Activated T-helper 2 cell treated with anti-CD3 and anti-CD28 coated beads, Interferon-gamma antibody, Interleukin-2, Interleukin-4, amounts not matched to agents 10 μg/mL and 5 μg/mL and 100 μg/mL, durations not matched to agents 14 hours and 24 hours and 36 hours (primary cell): ENCODE measurements at regions of chr5 and their contacts with region 1.

Region 1: DNA sequence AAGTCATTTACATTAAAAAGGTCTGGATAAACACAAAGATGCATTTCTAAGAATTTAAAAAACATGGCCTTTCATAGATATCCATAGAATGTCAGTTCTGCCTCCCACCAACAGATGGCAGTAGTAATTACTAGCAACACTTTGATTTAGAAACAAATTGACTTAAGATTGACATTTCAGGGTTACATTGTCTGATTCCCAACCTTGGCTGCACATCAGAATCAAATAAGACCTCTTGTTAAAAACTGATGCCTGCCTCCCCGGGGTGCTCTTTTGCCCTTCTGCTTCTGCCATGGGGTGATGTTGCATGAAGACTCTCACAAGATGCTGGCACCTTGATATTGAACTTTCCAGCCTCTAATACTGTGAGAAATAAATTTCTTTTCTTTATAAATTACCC is 146.2 kb upstream of the GPR151 start:
- DNase-seq: no peak
- H3K4me3 Mint-ChIP-seq: no peak overlapping the region
- H3K27ac Mint-ChIP-seq: no peak overlapping the region
- H3K4me1 Mint-ChIP-seq: no peaks in the 10 kb centered on the region
- H3K27me3 Mint-ChIP-seq: peaks cover 2% of the 10 kb centered on the region

Region 2: DNA sequence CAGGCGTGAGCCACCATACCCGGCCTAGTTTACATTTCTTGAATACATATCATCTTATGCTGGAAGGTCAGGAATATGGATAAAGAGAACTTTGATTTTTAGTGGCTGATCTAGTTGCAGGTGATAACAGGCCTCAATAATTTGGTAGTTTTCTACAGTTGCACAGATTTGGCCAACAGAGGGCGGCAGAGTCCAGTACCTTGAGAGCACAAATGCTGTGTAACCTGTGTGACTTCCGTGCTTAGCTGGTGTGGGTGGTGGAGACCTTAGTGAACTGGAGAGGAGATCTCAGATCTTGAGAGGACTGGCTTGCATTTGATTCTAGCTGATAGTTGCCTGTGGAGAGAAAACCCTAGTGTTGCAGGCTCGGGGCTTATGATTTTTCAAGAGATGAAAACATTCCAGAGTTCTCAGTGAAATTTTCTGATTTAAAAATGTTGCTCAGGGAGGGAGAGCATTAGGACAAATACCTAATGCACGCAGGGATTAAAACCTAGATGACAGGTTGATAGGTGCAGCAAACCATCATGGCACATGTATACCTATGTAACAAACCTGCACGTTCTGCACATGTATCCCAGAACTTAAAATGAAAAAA is 128.9 kb before region 1 on chr5:
- intact Hi-C with region 1: loop called (anchors 2 kb)
- DNase-seq: peak; percentile 65
- H3K4me3 Mint-ChIP-seq: no peak overlapping the region
- H3K27ac Mint-ChIP-seq: no peak overlapping the region
- H3K4me1 Mint-ChIP-seq: peaks cover 9% of the 10 kb centered on the region
- H3K27me3 Mint-ChIP-seq: peaks cover 2% of the 10 kb centered on the region

Region 3: DNA sequence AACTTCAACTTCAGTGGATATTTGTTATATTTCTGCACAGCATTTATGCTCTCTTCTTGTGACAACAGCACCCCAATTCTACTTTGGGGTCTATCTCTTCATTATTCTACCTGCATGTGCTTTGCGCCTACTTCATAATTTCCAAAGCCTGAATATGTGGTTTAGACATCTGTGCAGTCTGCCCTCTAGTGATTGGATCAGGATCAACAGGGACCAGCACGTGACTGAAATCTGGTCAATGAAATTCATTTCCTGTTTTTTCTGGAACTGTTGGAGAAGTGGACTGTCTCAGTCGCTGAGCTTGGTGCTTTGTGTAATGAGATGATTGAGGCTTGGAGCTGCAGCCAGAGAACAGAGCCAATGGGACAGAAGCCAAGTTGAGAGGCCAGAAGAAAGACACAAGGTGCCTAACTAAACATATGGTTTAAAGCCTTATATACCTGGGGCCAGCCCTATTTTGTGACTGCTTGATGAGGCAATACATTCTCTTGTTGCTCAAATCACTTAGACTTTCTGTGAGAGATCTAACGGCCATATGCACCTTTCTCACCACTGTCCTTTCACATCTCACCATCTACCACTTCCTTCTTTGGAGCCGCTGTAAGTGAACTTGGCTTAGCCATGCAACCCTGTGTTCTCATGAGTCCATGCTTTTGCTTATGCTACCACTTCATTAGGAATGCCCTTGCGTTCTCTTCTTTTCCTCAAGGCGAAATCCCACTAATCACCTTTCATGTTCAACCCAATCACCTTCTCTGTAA is 285.1 kb after region 1 on chr5:
- intact Hi-C with region 1: loop called (anchors 5 kb)
- DNase-seq: no peak
- H3K4me3 Mint-ChIP-seq: no peak overlapping the region
- H3K27ac Mint-ChIP-seq: no peak overlapping the region
- H3K4me1 Mint-ChIP-seq: no peaks in the 10 kb centered on the region
- H3K27me3 Mint-ChIP-seq: peaks cover 11% of the 10 kb centered on the region

Region 4: DNA sequence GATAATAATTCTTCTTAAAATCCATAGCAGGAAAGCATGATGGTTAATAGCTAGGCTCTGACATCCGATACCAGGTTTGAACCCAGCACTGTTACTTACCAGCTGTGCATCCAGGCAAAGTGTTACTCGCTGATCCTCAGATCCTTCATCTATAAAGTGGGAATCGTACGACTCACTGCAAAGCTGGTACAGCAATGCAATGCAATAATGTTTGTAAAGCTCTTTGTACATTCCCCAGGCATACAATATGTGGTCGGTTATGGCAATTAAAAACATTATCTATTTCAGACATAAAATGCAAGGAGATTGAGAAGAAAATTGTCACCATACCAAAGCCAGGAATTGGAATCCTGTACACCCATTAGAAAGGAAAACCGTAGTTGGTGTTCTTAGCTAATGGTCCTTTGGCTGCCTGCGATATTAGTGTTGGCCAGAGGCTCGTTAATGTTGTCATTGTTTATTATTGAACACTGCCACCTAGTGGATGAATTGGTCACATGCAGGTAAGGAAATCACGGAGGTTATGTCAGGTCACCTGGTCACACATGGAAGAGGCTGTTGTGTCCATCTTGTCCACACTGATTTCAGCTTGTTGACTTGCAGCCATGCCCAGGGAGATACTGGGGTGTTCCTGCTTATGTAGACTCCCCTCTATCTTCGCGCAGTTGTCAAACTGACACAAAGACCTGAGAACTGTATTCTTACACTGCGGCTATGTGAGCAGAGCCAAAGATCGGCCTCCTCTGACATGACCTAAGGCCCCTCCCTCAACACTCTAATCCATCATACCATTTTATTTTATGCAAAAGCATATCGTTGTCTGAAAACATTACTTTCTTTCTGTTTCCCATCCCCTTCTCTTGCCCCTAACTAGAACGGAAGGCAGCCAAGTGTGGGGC is 303.8 kb after region 1 on chr5:
- intact Hi-C with region 1: loop called (anchors 1 kb)
- DNase-seq: peak; percentile 25
- H3K4me3 Mint-ChIP-seq: no peak overlapping the region
- H3K27ac Mint-ChIP-seq: no peak overlapping the region
- H3K4me1 Mint-ChIP-seq: peaks cover 1% of the 10 kb centered on the region
- H3K27me3 Mint-ChIP-seq: peaks cover 4% of the 10 kb centered on the region